ENCODE measurements at regions of chr4 and their contacts with region 1.

Region 1: GRCh38 chr4:75844151-75844662 is 58.0 kb downstream of the PPEF2 start:
- DNase-seq: peak; percentile 14
- H3K4me3 ChIP-seq: no peak overlapping the region
- H3K27ac ChIP-seq: no peak overlapping the region
- H3K4me1 ChIP-seq: peaks cover 12% of the 10 kb centered on the region
- H3K27me3 ChIP-seq: no peaks in the 10 kb centered on the region
- CTCF ChIP-seq: no peak
- POLR2A ChIP-seq: no peak

Region 2: DNA sequence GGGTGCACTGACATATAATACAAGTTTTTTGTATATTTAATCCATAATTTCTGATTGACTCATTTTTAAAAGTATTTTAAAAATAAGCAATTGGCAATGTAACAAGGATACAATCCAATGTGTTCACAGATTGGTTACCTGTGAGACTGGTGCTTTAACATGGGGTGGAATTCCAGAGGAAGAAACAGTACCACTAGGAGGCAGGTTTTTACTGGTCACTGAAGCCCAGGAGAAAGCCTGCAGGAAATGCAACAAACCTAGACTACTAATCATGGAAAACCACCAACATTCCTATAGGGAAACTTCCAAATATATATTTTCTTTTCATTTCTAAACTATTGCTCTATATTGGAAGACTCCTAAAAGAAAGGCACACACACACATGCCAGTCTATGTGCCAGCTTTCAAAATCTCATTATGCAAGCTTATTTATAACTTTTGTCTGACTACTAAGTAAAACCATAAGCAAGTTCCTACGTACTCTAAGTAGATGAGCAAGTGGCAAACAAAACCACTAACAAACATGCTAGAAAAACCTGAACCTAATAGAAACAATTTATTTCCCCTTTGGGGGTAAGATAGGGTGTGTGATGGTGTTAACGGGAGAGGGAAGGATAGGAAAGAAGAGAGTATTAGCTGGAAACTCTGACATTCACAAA is 190.2 kb before region 1 on chr4:
- CTCF ChIA-PET with region 1: interaction called, 14 read pairs
- POLR2A ChIA-PET with region 1: no interaction called
- dilution Hi-C with region 1: no loop called
- intact Hi-C with region 1: loop called (anchors 1 kb)
- DNase-seq: peak; percentile 61
- H3K4me3 ChIP-seq: no peak overlapping the region
- H3K27ac ChIP-seq: no peak overlapping the region
- H3K4me1 ChIP-seq: peaks cover 4% of the 10 kb centered on the region
- H3K27me3 ChIP-seq: no peaks in the 10 kb centered on the region
- CTCF ChIP-seq: peak; percentile 38 to 49
- POLR2A ChIP-seq: no peak

Measured in endothelial cell of umbilical vein (primary cell).